ENCODE measurements at regions of chr12 and their contacts with region 1.

Region 1: GRCh38 chr12:48995061-48995879 is 3.9 kb downstream of the DDN start:
- DNase-seq: peak; percentile 63
- H3K4me3 ChIP-seq: peak overlapping the region in 2 of 3 experiments; percentile 21 to 26
- H3K27ac ChIP-seq: no peak overlapping the region
- H3K4me1 ChIP-seq: peaks cover 17% of the 10 kb centered on the region
- H3K27me3 ChIP-seq: no peaks in the 10 kb centered on the region
- CTCF ChIP-seq: peak; percentile 72 to 85

Region 2: GRCh38 chr12:48890657-48891418 is 104.4 kb before region 1 on chr12:
- CTCF ChIA-PET with region 1: interaction called, 3 read pairs
- dilution Hi-C with region 1: no loop called
- in situ Hi-C with region 1: no loop called
- intact Hi-C with region 1: loop called (anchors 2 kb)
- DNase-seq: peak; percentile 65
- H3K4me3 ChIP-seq: peak overlapping the region in 1 of 3 experiments; percentile 20
- H3K27ac ChIP-seq: no peak overlapping the region
- H3K4me1 ChIP-seq: peaks cover 4% of the 10 kb centered on the region
- H3K27me3 ChIP-seq: no peaks in the 10 kb centered on the region
- CTCF ChIP-seq: peak; percentile 79 to 95

Region 3: DNA sequence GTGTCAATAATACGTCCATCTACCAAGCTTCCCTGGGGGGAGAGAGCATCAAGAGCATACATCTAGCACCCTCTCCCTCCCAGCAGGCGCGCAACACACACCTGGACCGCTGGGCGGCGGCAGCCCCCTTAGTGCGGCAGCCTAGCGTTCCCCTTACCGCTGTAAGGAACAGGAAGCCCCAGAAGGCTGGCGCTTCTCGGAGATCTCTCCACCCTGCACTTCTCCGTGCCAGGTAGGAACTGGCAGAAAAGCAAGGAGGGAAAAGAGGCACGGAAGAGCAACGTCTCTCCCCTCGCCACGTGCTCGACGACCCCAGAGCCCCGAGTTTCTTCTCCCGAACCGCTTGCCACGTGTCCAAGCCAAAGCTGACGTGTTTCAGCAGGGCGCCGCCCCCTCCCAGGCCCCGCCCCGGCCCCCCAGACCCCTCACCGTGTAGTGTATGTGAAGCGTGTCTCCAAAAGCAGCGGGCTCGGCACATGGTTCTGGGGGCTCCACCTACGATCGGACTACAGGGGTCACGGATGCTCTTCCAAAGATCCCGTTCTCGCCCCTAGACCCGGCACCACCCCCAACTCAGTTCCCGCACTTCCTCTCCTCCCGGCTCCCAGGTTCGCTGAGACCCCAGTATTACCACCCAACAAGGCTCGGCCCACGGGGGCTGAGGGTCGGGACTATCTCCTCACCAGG is 70.5 kb before region 1 on chr12:
- CTCF ChIA-PET with region 1: no interaction called
- dilution Hi-C with region 1: loop called (anchors 5 kb)
- in situ Hi-C with region 1: no loop called
- intact Hi-C with region 1: no loop called
- DNase-seq: peak; percentile 11
- H3K4me3 ChIP-seq: peak overlapping the region; percentile 64 to 87 (median 73)
- H3K27ac ChIP-seq: peak overlapping the region; percentile 1
- H3K4me1 ChIP-seq: peaks cover 7% of the 10 kb centered on the region
- H3K27me3 ChIP-seq: no peaks in the 10 kb centered on the region
- CTCF ChIP-seq: peak; percentile 60

Region 4: GRCh38 chr12:49088190-49088931 is 93.1 kb after region 1 on chr12:
- CTCF ChIA-PET with region 1: no interaction called
- dilution Hi-C with region 1: no loop called
- in situ Hi-C with region 1: no loop called
- intact Hi-C with region 1: no loop called
- DNase-seq: peak; percentile 90
- H3K4me3 ChIP-seq: no peak overlapping the region
- H3K27ac ChIP-seq: no peak overlapping the region
- H3K4me1 ChIP-seq: peaks cover 26% of the 10 kb centered on the region
- H3K27me3 ChIP-seq: peaks cover 27% of the 10 kb centered on the region
- CTCF ChIP-seq: peak; percentile 88 to 90